Right cardiac atrium (tissue), 5 donors: ENCODE measurements at regions of chr2 and their contacts with region 1.

Region 1: GRCh38 chr2:232018181-232018580 is 56.7 kb downstream of the DIS3L2 start:
- DNase-seq: no peak
- ATAC-seq: no peak
- H3K4me3 ChIP-seq: no peak overlapping the region
- H3K27ac ChIP-seq: no peak overlapping the region
- H3K4me1 ChIP-seq: peaks cover 2% of the 10 kb centered on the region
- H3K27me3 ChIP-seq: no peaks in the 10 kb centered on the region

Region 2: GRCh38 chr2:232073026-232073425 is 54.8 kb after region 1 on chr2:
- intact Hi-C with region 1: loop called in 1 of 4 experiments (anchors 5 kb)
- DNase-seq: no peak
- ATAC-seq: peak; percentile 31 to 80
- H3K4me3 ChIP-seq: no peak overlapping the region
- H3K27ac ChIP-seq: no peak overlapping the region
- H3K4me1 ChIP-seq: peaks cover 5% of the 10 kb centered on the region
- H3K27me3 ChIP-seq: no peaks in the 10 kb centered on the region